Endothelial cell of umbilical vein (primary cell): ENCODE measurements at regions of chr16 and their contacts with region 1.

Region 1: GRCh38 chr16:56789360-56789759 is 59.4 kb downstream of the NUP93 start:
- DNase-seq: peak; percentile 55
- H3K4me3 ChIP-seq: no peak overlapping the region
- H3K27ac ChIP-seq: no peak overlapping the region
- H3K4me1 ChIP-seq: peaks cover 4% of the 10 kb centered on the region
- H3K27me3 ChIP-seq: no peaks in the 10 kb centered on the region
- CTCF ChIP-seq: peak; percentile 6 to 53
- POLR2A ChIP-seq: no peak

Region 2: GRCh38 chr16:56513972-56514371 is 275.4 kb before region 1 on chr16:
- CTCF ChIA-PET with region 1: interaction called, 4 read pairs
- POLR2A ChIA-PET with region 1: no interaction called
- dilution Hi-C with region 1: no loop called
- intact Hi-C with region 1: loop called (anchors 1 kb)
- DNase-seq: peak; percentile 79
- H3K4me3 ChIP-seq: no peak overlapping the region
- H3K27ac ChIP-seq: no peak overlapping the region
- H3K4me1 ChIP-seq: peaks cover 9% of the 10 kb centered on the region
- H3K27me3 ChIP-seq: no peaks in the 10 kb centered on the region
- CTCF ChIP-seq: peak; percentile 56 to 57
- POLR2A ChIP-seq: no peak

Region 3: GRCh38 chr16:56814537-56815432 is 25.4 kb after region 1 on chr16:
- CTCF ChIA-PET with region 1: interaction called, 21 read pairs
- POLR2A ChIA-PET with region 1: no interaction called
- dilution Hi-C with region 1: no loop called
- intact Hi-C with region 1: no loop called
- DNase-seq: peak; percentile 12
- H3K4me3 ChIP-seq: no peak overlapping the region
- H3K27ac ChIP-seq: no peak overlapping the region
- H3K4me1 ChIP-seq: peaks cover 25% of the 10 kb centered on the region
- H3K27me3 ChIP-seq: no peaks in the 10 kb centered on the region
- CTCF ChIP-seq: no peak
- POLR2A ChIP-seq: no peak

Region 4: DNA sequence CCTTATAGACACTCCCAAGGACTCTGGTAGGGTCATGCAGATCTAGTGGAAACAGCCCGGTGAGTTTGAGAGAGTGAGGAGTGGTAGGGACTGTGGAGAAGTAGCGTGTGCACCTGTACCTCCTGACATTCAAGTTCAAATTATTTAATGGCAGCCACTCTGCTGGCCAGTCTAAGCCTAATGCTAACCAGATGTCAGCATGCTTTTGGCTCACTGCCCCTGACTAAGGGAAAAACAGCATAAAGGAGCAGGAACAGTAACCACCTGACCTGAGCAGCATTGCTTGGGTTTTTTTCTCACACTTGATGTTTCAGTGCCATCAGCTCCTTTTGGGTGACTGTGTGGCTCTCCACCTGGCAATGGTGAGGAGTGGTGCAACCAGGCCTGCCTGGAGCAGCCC is 51.9 kb after region 1 on chr16:
- CTCF ChIA-PET with region 1: interaction called, 231 read pairs
- POLR2A ChIA-PET with region 1: no interaction called
- dilution Hi-C with region 1: no loop called
- intact Hi-C with region 1: no loop called
- DNase-seq: no peak
- H3K4me3 ChIP-seq: no peak overlapping the region
- H3K27ac ChIP-seq: no peak overlapping the region
- H3K4me1 ChIP-seq: peaks cover 14% of the 10 kb centered on the region
- H3K27me3 ChIP-seq: no peaks in the 10 kb centered on the region
- CTCF ChIP-seq: no peak
- POLR2A ChIP-seq: no peak

Region 5: GRCh38 chr16:56866943-56867830 is 77.8 kb after region 1 on chr16:
- CTCF ChIA-PET with region 1: interaction called, 47 read pairs
- POLR2A ChIA-PET with region 1: no interaction called
- dilution Hi-C with region 1: no loop called
- intact Hi-C with region 1: loop called (anchors 1 kb)
- DNase-seq: peak; percentile 57
- H3K4me3 ChIP-seq: no peak overlapping the region
- H3K27ac ChIP-seq: no peak overlapping the region
- H3K4me1 ChIP-seq: no peaks in the 10 kb centered on the region
- H3K27me3 ChIP-seq: no peaks in the 10 kb centered on the region
- CTCF ChIP-seq: peak; percentile 55 to 56
- POLR2A ChIP-seq: no peak

Region 6: DNA sequence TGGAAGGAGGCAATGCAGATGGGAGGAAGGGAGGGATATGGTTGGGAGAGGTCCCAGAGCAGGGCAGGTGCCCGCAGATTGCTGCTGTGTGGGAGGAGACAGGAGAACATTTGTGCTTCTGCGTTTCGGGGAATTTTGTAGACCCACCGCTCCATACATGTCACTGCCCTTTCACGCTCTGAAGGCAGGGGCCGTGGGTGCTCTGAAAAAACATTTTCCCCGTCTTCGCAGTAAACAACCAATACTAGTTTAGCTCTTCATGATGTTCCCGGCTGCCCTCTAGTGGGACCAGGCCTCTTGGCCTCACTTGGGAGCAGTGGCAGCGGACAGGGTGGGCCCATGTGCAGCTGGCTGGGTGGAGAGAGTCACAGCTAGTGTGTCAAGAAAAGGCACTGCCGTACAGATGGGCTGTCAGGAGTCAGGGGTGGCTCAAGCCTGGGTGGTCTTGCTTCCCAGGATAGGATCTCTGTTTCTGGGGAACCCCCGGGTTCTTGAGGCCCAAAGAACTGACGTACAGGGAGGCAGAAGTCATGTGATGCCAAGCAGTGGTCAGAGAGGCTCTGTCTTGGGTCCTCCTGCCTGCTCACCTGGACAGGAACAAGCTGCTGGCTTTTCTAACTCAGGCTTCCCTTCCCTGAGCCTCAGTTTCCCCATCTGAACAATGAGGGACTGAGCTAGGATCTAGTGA is 256.5 kb after region 1 on chr16:
- CTCF ChIA-PET with region 1: interaction called, 10 read pairs
- POLR2A ChIA-PET with region 1: no interaction called
- dilution Hi-C with region 1: no loop called
- intact Hi-C with region 1: loop called (anchors 1 kb)
- DNase-seq: peak; percentile 75
- H3K4me3 ChIP-seq: no peak overlapping the region
- H3K27ac ChIP-seq: no peak overlapping the region
- H3K4me1 ChIP-seq: no peaks in the 10 kb centered on the region
- H3K27me3 ChIP-seq: no peaks in the 10 kb centered on the region
- CTCF ChIP-seq: peak; percentile 72 to 80
- POLR2A ChIP-seq: no peak